ENCODE measurements at regions of chr16 and their contacts with region 1.

Region 1: GRCh38 chr16:79601931-79602627 is 1.5 kb upstream of the MAF start:
- DNase-seq: peak; percentile 53 to 94 (median 83)

Region 2: DNA sequence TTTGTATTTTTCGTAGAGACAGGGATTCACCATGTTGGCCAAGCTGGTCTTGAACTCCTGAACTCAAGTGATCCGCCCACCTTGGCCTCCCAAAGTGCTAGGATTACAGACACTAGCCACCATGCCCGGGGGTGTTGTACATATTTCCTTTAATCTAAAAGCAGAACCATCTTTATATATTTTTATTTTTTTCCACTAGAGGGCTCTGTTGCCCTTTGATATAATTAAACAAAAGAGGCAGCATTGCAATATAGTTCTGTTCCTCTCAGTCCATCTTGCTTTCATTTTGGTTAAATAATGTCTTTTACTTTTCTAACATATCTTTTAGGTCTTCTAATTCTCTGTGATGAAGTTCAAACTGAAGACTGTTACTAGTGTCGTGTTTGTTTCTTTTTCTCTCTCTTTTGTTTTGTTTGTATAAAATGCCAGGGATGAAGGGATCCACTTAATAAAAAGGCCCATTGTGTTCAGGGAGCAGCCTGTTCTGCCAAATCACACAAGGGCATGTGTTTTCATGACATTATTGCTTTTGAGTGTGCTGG is 1479.2 kb before region 1 on chr16:
- intact Hi-C with region 1: loop called (anchors 5 kb)
- DNase-seq: peak in 2 of 10 donors; percentile 37 to 49

Region 3: DNA sequence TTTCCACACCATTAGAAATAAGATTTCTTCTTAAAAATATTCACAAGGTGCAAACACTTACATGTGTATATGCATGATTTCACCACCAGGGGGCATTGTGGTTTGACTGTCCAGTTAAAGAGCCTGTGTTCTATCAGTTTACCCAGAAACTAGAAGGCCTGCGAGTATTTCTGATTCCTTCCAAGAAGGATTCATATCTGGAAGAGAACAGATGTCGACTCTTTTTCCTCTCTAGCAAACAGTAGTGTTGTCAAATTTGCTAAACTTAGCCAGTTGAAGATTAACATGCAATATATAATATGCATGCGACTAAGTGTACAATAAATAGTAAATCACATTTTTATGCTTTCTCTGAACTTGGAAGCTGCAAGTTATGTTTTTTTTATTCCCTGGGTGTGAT is 1098.5 kb before region 1 on chr16:
- intact Hi-C with region 1: loop called (anchors 1 kb)
- DNase-seq: peak in 3 of 10 donors; percentile 55 to 66 (median 57)

Region 4: GRCh38 chr16:78984887-78985464 is 617.1 kb before region 1 on chr16:
- intact Hi-C with region 1: loop called (anchors 5 kb)
- DNase-seq: peak in 1 of 10 donors; percentile 75

Region 5: DNA sequence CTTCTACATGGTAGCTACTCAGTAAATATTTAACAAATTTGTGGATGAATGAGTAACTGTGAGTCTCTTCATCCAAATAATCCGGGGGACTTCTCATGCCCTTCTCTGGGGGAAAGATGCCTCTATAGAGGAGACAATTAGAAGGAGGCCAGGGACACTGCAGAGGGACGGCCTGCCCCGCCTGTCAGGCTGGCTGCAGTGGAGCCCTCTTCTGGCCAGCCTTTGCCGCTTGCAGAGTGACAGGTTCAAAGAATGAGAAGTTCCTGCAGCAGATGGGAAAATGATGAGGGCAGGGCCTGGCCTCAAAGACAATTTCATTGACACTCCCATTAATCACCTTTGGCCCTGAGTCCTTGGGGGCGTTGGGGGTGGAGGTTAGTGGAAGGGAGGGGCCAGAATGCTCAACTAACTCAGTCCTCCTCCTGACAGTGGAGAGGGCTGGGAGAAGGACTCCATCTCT is 340.6 kb before region 1 on chr16:
- intact Hi-C with region 1: no loop called
- DNase-seq: peak in 6 of 10 donors; percentile 26 to 91 (median 40)

Region 6: GRCh38 chr16:79286646-79287423 is 315.2 kb before region 1 on chr16:
- intact Hi-C with region 1: loop called (anchors 10 kb)
- DNase-seq: peak in 6 of 10 donors; percentile 20 to 89 (median 43)

Region 7: DNA sequence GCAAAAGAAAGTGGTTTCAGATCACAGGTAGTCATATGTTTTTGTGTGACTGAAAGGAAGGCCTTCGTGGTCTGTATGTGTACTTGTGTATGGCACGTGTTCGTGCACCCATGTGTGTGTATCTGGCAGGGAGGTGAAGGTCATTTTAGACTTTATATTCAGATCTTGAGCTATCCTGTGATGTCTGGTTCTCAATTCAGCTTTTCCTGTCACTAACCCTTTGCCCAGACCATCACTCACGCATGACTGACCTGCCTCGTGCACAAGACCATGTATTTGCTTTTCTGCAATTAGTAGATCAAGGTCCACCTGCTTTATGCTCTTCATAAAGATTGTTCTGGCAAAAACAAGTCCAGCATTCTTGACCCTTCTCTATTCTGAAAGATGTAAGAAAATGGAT is 138.2 kb after region 1 on chr16:
- intact Hi-C with region 1: no loop called
- DNase-seq: no peak

Region 8: DNA sequence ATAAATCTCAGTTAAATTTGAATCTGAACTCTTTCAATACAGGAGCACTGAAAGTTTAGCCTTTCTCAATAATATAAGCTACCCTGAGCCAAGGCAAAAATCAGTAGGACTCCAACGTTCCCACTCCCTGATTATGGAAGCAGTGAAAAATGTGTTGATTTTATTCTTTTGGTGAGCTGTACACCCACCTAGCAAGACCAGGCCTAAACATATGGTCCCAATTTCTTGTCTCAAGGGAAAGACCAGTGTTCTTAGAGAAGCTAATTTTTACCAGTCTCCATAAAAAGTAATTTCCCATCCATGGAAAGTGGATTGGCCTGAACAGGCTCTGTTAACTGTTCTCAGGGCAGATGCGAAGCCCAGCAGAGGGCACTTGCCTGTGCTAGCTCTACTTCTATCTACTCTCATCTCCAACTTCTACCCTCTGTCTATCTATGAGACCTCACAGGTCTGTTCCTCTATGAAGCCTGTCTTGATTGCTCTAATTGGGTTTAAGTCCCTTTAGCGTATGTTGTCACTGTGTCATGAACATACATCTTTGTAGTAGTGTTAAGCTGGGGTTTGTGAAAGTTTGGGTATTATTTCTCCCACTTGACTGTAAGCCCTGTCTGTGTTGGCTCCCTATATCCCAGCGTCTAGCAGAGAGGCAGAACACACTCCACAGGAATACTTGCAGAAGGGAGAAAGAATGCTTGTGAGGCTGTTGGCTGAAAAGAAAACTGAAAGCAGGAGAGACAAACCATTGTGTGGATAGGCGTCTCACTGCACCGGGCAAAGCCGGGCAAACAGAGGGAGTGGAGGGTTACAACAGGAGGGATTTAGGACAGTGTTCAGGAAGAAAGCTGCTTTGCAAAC is 165.6 kb after region 1 on chr16:
- intact Hi-C with region 1: loop called (anchors 5 kb)
- DNase-seq: peak in 4 of 10 donors; percentile 8 to 83 (median 48)

Region 9: GRCh38 chr16:80084685-80085084 is 482.6 kb after region 1 on chr16:
- intact Hi-C with region 1: loop called (anchors 10 kb)
- DNase-seq: peak in 4 of 10 donors; percentile 9 to 44 (median 21)